Activated CD8-positive, alpha-beta T cell treated with anti-CD3 and anti-CD28 coated beads for 36 hours (primary cell): ENCODE measurements at regions of chr9 and their contacts with region 1.

Region 1: GRCh38 chr9:38417003-38417945 is 7.0 kb downstream of the IGFBPL1 start:
- DNase-seq: peak; percentile 75
- ATAC-seq: peak; percentile 61
- H3K4me3 Mint-ChIP-seq: no peak overlapping the region
- H3K27ac Mint-ChIP-seq: no peak overlapping the region
- H3K4me1 Mint-ChIP-seq: no peaks in the 10 kb centered on the region
- H3K27me3 Mint-ChIP-seq: peaks cover 13% of the 10 kb centered on the region
- CTCF ChIP-seq: peak; percentile 75

Region 2: DNA sequence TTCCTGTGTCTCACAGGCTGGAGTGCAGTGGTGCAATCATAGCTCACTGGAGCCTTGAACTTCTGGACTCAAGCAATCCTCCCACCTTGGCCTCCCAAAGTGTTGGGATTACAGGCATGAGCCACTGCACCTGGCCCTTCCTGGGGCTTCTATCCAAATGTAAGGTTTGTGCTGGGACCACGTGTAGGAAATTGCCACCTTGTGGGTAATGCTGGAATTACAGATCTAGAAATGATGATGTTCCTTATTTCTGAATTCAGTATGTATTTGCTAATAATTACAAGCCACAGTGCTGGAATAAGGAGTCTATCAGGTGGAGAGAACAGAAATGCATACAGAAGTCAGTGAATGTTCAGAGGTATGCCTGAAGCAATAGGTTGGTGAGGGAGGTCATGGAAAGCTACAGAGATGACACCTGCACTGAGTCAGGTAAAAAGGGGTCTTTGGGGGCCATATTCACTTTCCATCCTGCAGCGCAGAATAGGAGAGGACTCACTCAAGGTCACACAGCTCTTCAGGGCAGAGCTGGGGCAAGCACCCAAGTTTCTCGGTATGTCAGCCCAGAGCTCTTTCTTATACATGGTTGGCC is 15.7 kb after region 1 on chr9:
- CTCF ChIA-PET with region 1: interaction called, 18 read pairs
- POLR2A ChIA-PET with region 1: no interaction called
- intact Hi-C with region 1: no loop called
- DNase-seq: no peak
- ATAC-seq: peak; percentile 51
- H3K4me3 Mint-ChIP-seq: no peak overlapping the region
- H3K27ac Mint-ChIP-seq: no peak overlapping the region
- H3K4me1 Mint-ChIP-seq: no peaks in the 10 kb centered on the region
- H3K27me3 Mint-ChIP-seq: peaks cover 6% of the 10 kb centered on the region
- CTCF ChIP-seq: peak; percentile 75